ENCODE measurements at regions of chr7 and their contacts with region 1.

Region 1: DNA sequence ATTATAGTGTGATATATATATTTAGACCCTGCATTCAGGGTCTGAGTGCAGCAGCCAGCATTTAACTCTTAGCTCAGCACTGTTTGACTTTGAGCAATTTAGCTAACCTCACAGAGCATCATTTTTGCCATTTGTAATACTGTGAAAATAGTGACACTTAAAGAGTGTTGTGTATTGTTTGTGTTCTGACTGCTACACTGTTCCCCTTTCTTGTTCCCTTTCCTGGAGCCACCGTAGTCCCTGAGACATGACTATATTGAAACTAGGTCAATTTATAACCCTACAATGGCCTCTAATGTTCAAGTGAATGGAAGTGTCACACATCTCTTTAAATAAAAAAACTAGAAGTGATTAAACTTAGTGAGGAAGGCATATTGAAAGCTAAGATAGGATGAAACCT is 20.3 kb upstream of the CD36 start:
- H3K4me3 Mint-ChIP-seq: no peak overlapping the region
- H3K27ac Mint-ChIP-seq: no peak overlapping the region
- H3K4me1 Mint-ChIP-seq: peaks cover 53% of the 10 kb centered on the region
- H3K27me3 Mint-ChIP-seq: no peaks in the 10 kb centered on the region

Region 2: GRCh38 chr7:80517282-80517747 is 100.8 kb before region 1 on chr7:
- intact Hi-C with region 1: no loop called
- H3K4me3 Mint-ChIP-seq: peak overlapping the region; percentile 4
- H3K27ac Mint-ChIP-seq: peak overlapping the region; percentile 52
- H3K4me1 Mint-ChIP-seq: peaks cover 14% of the 10 kb centered on the region
- H3K27me3 Mint-ChIP-seq: no peaks in the 10 kb centered on the region

Region 3: DNA sequence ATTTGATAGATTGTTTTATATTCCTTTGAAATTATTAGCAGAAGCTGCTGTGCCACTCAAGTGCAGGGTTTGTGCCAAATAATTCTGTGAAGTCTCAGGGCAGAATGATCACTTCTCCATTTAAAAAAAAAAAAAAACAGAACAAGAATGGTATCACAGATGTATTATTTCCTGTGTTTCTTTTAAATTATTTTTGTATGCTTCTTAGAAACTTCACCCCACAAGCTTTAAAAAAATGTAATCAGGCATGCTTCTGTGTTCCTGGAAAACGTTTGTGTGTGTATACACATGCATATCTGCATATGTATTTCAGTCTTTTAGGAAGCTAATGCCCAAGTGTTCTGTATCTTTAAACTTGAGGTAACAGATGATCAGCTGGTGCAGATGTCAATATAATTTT is 14.0 kb after region 1 on chr7:
- intact Hi-C with region 1: loop called (anchors 2 kb)
- H3K4me3 Mint-ChIP-seq: no peak overlapping the region
- H3K27ac Mint-ChIP-seq: no peak overlapping the region
- H3K4me1 Mint-ChIP-seq: peaks cover 27% of the 10 kb centered on the region
- H3K27me3 Mint-ChIP-seq: peaks cover 2% of the 10 kb centered on the region

Region 4: DNA sequence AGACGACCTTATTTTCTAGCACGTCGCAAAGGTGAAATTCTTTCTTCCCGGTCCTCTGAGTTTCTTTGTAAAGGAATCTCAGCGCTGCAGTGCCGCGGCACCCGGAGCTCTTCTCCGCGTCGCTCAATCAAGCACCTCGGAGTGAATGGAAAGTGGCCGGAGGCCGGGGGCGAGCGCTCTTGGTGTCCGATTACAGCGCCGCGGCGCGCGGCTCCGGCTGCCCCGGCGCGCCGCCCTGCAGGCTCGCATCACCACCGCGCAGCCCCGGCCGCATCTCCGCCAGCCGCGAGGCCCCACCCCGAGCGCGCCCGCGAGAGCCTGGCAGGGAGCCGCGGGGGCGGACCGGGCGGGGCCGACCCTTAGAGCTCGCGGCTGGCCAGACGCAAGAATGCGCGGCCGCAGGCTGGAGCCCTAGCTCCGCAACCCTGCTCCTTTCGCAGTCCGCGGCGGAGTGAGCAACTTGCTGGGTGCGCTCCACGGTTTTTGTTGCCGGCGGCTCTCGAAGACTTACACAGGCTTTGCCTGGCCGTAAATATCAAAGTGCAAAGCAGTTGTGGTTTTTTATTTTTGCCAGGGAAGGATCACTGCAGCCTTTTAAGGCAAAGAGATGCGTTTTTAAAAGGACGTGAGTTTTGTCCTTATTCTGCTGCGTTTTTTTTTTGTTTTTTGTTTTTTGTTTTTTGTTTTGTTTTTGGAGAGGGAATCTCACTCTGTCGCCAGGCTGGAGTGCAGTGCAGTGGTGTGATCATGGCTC is 301.0 kb after region 1 on chr7 and contains the start of gene SEMA3C:
- intact Hi-C with region 1: no loop called
- H3K4me3 Mint-ChIP-seq: peak within 1 kb of the TSS; percentile 89
- H3K27ac Mint-ChIP-seq: peak within 1 kb of the TSS; percentile 92
- H3K4me1 Mint-ChIP-seq: peaks cover 29% of the 10 kb centered on the region
- H3K27me3 Mint-ChIP-seq: peaks cover 3% of the 10 kb centered on the region